Activated CD4-positive, alpha-beta T cell treated with anti-CD3 and anti-CD28 coated beads for 36 hours (primary cell): ENCODE measurements at regions of chr17 and their contacts with region 1.

Region 1: DNA sequence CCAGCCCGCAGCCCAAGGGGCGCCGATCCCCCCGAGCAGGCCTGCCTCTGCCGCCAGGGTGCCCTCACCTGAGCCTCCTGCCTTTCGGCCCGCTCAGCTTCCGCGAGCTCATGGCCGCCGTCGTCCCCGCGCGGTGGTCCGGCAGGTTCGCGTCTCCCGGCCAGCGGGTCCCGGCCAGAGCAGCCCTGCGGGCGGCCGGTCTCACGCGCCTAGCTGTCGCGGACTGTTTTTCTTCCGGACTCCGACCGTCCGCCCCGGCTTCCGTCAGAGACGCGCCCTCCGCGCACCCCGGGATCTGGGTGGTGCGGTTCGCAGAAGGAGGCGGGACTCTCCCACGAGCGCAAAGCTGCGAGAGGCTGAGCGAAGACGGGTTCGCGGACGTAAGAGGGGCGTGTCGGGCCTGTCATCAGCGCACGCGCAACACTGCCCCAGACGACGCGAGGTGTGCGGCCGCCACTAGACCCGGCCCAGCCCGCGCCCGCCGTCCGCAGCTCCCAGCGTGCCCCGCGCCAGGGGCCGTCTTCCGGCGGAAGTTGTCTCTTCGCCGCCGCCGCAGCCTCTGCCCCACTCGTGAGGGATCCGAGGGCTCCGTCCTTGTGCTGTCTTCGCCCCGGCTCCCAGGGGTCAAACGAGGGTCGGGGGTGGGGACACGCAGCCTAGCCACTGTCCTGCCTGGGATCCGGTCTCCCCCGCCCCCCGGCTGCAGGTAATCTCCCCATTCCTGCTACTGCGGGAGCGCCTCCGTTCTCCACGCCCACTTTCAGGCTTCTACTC is at the start of gene INPP5K:
- DNase-seq: peak; percentile 99
- ATAC-seq: peak; percentile 99
- H3K4me3 Mint-ChIP-seq: peak within 1 kb of the TSS; percentile 85
- H3K27ac Mint-ChIP-seq: peak within 1 kb of the TSS; percentile 81
- H3K4me1 Mint-ChIP-seq: peaks cover 28% of the 10 kb centered on the region
- H3K27me3 Mint-ChIP-seq: no peaks in the 10 kb centered on the region
- total RNA-seq, gene INPP5K: 18.5 to 27.3 TPM

Region 2: GRCh38 chr17:1260086-1260769 is 256.3 kb before region 1 on chr17:
- CTCF ChIA-PET with region 1: interaction called, 3 read pairs
- POLR2A ChIA-PET with region 1: no interaction called
- intact Hi-C with region 1: loop called in 1 of 2 experiments (anchors 1 kb)
- DNase-seq: no peak
- ATAC-seq: no peak
- H3K4me3 Mint-ChIP-seq: no peak overlapping the region
- H3K27ac Mint-ChIP-seq: no peak overlapping the region
- H3K4me1 Mint-ChIP-seq: peaks cover 11% of the 10 kb centered on the region
- H3K27me3 Mint-ChIP-seq: peaks cover 24% of the 10 kb centered on the region

Region 3: DNA sequence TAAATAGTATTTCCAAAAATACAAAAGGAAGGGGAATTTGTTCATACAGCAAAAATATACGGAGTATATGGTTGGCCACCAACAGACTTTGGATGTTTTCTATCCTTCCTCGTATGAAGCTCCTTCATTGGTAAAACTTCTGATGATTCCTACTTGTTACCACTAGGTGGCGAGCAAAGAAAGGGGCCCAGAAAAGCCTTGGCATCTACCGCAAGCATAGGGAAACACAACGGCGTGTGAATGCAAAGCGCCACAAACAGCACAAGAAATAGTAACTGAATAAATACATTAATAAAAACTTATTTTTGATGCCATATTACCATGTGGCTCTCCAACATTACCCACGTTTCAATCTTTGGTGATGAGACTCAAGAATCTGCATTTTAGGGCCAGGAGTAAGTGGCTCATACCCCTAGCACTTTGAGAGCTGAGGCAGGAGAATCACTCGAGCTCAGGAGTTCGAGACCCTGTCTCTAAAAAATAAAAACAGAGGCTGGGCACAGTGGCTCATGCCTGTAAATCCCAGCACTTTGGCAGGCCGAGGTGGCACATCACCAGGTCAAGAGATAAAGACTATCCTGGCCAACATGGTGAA is 151.0 kb before region 1 on chr17:
- CTCF ChIA-PET with region 1: interaction called, 58 read pairs
- POLR2A ChIA-PET with region 1: interaction called, 3 read pairs
- intact Hi-C with region 1: loop called (anchors 1 kb)
- DNase-seq: peak; percentile 74
- ATAC-seq: peak; percentile 65
- H3K4me3 Mint-ChIP-seq: peak overlapping the region; percentile 21
- H3K27ac Mint-ChIP-seq: no peak overlapping the region
- H3K4me1 Mint-ChIP-seq: peaks cover 71% of the 10 kb centered on the region
- H3K27me3 Mint-ChIP-seq: no peaks in the 10 kb centered on the region

Region 4: DNA sequence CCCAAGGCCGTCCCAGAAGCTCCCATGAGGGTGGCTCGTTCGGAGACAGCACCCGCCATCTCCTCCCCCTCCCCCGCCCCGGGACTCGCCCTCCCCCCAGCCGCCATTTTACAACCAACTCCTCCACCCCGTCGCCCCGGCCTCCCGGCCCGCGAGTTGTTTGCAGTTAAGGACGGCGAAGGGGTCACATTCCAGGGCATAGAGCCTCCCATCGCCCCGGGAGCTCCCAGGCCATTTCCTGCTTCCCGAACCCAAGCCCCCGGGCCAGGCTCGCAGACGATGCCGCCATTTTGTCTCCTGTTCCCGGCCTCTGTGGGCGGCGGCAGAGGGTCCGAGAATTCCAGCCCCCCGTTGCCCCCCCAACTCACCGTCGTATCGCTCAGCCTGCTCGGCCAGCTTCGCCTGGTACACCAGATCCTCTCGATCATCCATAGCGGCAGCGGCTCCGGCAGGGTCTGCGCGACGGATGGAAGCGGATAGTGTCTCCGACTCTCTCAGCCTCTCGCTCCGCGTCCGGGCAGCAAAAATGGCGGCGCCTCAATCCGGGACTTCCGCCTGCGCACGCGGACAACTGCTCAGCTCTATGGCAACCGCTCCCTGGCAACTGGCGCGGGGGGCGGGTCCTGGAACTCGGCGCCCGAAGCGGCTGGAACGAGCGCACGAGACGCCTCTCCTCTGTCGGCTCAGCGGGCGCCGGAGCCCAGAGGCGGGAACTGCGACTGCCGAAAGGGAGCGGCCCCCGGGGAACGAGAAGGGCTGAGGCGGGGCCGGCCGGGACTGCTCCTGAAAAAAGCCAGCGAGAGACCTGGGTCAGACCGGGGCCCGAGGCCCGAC is 116.7 kb before region 1 on chr17 and contains the start of gene YWHAE:
- CTCF ChIA-PET with region 1: interaction called, 3 read pairs
- POLR2A ChIA-PET with region 1: no interaction called
- intact Hi-C with region 1: loop called in 1 of 2 experiments (anchors 1 kb)
- DNase-seq: peak; percentile 99
- ATAC-seq: peak; percentile 95
- H3K4me3 Mint-ChIP-seq: peak within 1 kb of the TSS; percentile 100
- H3K27ac Mint-ChIP-seq: peak within 1 kb of the TSS; percentile 100
- H3K4me1 Mint-ChIP-seq: peaks cover 27% of the 10 kb centered on the region
- H3K27me3 Mint-ChIP-seq: no peaks in the 10 kb centered on the region
- total RNA-seq, gene YWHAE: 520 to 553 TPM

Region 5: DNA sequence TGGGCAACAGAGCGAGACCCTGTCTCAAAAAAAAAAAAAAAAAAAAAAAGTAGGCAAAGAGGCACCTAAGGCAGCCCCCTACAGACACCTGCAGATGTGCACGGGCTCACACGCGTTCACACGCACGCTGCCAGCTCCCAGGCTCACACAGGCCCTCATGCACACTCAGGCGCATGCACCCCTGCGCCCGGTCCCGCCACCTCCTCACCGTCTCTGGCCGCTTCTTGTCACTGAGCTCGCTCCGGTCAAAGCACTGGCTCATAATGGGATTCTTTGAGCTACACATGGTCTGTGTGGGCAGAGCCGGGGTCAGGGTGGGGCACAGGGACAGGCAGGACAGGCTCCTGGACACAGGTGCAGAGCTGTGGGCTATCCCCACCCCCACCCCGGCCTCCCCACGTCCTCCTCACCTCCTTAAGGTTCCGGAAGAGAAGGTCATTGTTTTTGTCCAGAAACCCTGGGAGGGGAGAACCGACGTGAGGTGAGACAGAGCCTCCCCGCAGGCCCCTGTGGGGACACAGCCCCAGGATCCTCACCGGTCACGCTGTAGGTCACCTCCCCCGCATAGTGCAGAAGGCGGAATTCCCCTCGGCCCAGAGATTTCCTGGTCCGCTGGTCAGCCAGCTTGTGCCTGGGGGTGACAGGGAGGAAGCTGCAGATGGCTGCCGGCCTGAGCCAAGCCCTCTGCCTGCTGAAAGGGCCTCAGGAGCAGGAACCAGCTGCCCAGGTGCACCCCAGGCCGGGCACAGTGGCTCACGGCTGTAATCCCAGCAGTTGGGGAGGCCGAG is 42.0 kb before region 1 on chr17:
- CTCF ChIA-PET with region 1: no interaction called
- POLR2A ChIA-PET with region 1: no interaction called
- intact Hi-C with region 1: no loop called
- DNase-seq: no peak
- ATAC-seq: no peak
- H3K4me3 Mint-ChIP-seq: no peak overlapping the region
- H3K27ac Mint-ChIP-seq: no peak overlapping the region
- H3K4me1 Mint-ChIP-seq: peaks cover 16% of the 10 kb centered on the region
- H3K27me3 Mint-ChIP-seq: no peaks in the 10 kb centered on the region

Region 6: DNA sequence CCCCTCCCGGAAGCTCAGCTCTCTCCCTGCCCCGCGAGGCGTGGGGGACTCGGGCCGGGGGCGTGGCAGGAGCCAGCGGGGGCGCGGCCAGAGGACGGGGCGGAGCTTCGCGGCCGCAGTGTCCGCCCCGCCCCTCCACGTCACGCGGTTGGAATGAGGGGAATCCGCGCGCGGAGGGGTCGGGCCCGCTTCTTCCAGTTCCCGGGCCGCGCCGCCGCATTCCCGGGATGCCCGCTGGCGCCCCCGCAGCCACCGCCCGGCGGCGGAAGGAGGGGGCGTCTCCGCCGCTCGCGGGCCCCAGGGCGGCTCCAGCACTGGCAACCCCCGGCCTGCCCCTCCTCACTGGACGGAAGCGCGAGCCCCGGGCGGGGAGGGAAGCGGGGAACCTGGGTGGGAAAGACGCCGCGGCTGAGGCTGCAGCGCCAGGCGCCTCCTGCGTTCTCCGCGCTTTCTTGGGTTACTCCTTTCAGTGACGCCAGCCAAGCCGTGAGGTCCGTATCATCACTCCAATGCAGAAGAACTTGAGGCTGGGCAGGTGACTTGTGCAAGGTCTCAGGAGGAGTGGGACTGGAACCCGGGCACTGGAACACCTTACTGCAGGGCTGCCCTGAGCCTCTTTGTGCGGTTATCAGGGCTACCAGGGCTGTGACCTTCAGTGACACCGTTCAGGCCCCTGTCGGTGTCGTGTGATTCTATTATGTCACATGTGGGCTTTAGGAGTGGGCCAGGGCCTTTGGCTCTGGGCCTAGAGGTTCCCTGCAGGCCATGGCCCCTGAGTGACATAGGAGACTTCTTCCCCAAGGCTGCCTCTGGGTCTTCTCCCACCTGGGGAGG is 28.3 kb before region 1 on chr17:
- CTCF ChIA-PET with region 1: no interaction called
- POLR2A ChIA-PET with region 1: no interaction called
- intact Hi-C with region 1: loop called in 1 of 2 experiments (anchors 1 kb)
- DNase-seq: peak; percentile 77
- ATAC-seq: peak; percentile 10
- H3K4me3 Mint-ChIP-seq: peak overlapping the region; percentile 71
- H3K27ac Mint-ChIP-seq: no peak overlapping the region
- H3K4me1 Mint-ChIP-seq: peaks cover 42% of the 10 kb centered on the region
- H3K27me3 Mint-ChIP-seq: no peaks in the 10 kb centered on the region

Region 7: GRCh38 chr17:1561400-1562175 is 45.0 kb after region 1 on chr17:
- CTCF ChIA-PET with region 1: interaction called, 5 read pairs
- POLR2A ChIA-PET with region 1: no interaction called
- intact Hi-C with region 1: loop called in 1 of 2 experiments (anchors 1 kb)
- DNase-seq: peak; percentile 64
- ATAC-seq: peak; percentile 35
- H3K4me3 Mint-ChIP-seq: peak overlapping the region; percentile 81
- H3K27ac Mint-ChIP-seq: no peak overlapping the region
- H3K4me1 Mint-ChIP-seq: peaks cover 27% of the 10 kb centered on the region
- H3K27me3 Mint-ChIP-seq: no peaks in the 10 kb centered on the region

Region 8: DNA sequence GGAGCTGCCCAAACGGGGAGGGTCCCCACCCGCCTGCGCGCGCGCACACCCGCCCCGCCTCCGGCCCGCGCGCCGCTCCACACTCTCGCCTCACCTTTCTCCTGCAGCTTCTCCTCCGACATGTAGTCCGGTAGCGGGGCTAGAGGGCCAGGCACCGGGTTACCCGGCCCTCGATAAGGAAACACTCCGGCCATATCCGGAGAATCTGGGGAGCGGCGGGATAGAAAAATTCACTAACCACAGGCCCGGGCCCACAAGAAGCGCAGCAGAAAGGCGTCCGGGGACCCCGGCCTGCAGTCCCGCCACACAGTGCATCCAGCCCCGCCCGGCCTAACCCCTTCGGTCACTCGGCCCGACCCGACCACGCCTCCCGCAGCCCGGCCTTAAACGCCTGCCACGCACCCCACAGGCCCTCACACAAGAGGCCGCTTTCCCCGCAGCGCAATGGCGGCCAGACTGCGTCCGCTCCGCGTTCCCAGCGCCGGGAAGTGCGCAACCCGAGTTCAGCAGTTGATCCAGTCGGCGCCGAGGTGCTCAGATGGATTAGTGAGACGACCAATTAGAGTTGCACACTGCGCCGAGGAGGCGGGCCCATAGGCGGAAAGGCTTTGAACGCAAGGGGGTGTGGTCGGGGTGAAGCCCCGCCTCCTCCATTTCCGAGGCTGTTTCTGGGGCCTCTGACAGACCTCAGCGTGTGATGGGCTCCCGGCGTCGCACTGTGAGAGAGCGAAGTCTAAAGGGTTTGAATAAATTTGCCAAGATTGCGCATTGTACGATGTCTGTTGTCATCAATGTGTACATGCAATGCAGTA is 168.0 kb after region 1 on chr17 and contains the start of gene PRPF8:
- CTCF ChIA-PET with region 1: no interaction called
- POLR2A ChIA-PET with region 1: no interaction called
- intact Hi-C with region 1: loop called in 1 of 2 experiments (anchors 1 kb)
- DNase-seq: peak; percentile 99
- ATAC-seq: peak; percentile 100
- H3K4me3 Mint-ChIP-seq: peak within 1 kb of the TSS; percentile 98
- H3K27ac Mint-ChIP-seq: peak within 1 kb of the TSS; percentile 93
- H3K4me1 Mint-ChIP-seq: peaks cover 34% of the 10 kb centered on the region
- H3K27me3 Mint-ChIP-seq: no peaks in the 10 kb centered on the region
- total RNA-seq, gene PRPF8: 391 to 425 TPM